Lower leg skin (tissue), 4 donors: ENCODE measurements at regions of chr11 and their contacts with region 1.

Region 1: DNA sequence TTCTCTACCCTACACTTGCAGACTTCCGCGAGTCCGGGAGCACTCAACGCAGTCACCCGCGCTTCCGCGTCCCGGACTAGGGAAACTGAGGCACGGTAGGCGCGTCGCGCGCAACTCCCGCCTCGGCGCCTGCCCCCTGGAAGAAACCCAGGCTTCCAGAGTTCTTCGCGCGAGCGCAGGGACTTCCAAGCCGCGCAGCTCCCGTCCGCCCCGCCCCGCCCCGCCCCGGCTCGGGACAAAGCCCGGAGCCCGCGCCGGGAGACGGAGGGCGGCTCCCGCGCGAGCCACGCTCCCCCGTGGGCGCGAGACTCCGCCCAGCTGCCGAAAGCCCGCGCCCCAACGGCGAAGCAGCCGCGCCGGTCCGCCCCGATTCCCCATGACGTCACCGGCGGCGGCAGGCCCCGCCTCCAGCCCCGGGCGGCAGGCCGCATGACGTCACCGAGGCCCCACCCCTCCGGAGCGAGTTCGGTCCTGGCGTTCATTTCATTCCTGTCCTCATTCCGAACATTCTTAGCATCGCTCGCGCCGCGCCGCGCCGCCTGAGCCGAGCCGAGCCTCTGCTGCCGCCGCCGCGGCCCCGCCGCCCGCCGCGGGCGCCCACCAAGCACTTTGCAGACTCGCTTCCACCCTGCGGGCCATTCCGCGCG is at the start of gene TEAD1:
- DNase-seq: peak; percentile 93 to 99
- H3K4me3 ChIP-seq: peak within 1 kb of the TSS; percentile 87
- CTCF ChIP-seq: no peak
- POLR2A ChIP-seq: no peak
- total RNA-seq, gene TEAD1: 45.7 to 88.7 (median 71.4) TPM

Region 2: DNA sequence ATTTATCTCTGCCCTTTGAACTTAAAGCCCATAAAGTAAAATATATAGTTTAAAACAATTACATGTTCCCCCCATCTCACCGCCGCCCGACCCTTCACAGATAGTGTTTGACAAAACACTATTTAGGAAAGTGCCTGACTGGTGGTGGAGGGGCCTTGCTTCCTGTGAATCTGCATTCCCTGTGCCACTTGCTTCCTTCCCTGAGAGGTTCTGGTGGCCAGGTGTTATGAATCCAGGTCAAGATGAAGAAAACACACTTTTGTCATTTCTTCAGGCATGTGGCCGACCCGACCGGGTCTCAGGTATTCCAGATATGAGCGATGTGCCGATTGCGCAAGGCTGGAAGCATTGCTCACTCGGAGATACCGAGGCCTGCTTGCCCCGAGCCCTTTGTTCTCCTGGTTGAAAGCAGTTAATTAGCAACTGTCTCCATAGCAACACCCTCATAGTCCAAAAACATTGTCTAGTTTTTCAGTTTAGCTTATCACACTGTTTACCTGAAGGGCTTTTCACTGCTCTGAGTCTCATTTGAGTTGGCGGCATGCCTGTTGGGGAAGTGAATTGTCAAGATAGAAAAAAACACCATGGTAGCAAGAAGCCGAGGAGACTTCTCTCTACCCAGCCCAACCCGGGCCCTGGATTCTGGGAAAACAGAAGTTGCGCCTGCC is 128.5 kb after region 1 on chr11:
- intact Hi-C with region 1: loop called (anchors 10 kb)
- DNase-seq: peak in 1 of 2 donors; percentile 61
- H3K4me3 ChIP-seq: no peak overlapping the region
- CTCF ChIP-seq: no peak
- POLR2A ChIP-seq: no peak